GM13976 (cell line): ENCODE measurements at regions of chr5 and their contacts with region 1.

Region 1: DNA sequence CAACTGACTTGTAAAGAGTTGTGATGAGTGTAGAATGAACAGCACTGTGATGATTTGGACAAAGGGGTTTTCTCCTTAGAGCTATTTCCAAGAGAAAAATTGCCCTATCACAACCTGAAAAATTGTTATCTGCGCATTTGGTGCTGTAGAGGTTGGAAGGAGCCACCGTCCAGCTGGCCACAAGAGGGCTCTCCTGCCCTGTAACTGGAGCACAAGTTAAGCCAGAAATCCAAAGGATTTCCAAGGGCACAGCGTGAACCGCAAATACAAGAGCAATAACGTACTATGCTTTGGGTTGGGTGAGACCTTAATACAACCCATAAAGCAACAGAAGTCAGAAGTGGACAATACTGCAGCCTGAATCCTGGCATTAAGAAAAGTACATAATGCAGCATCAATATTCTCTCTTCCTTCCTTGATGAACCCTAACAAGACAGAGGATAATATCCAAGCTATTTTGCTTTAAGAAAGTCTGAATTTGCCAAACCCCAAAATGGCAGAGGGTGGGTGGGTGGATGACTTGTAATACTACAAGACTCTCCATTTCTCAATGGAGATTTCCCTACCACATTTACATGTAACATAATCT is 56.8 kb upstream of the SMIM32 start:
- DNase-seq: peak; percentile 28
- CTCF ChIP-seq: peak; percentile 79

Region 2: DNA sequence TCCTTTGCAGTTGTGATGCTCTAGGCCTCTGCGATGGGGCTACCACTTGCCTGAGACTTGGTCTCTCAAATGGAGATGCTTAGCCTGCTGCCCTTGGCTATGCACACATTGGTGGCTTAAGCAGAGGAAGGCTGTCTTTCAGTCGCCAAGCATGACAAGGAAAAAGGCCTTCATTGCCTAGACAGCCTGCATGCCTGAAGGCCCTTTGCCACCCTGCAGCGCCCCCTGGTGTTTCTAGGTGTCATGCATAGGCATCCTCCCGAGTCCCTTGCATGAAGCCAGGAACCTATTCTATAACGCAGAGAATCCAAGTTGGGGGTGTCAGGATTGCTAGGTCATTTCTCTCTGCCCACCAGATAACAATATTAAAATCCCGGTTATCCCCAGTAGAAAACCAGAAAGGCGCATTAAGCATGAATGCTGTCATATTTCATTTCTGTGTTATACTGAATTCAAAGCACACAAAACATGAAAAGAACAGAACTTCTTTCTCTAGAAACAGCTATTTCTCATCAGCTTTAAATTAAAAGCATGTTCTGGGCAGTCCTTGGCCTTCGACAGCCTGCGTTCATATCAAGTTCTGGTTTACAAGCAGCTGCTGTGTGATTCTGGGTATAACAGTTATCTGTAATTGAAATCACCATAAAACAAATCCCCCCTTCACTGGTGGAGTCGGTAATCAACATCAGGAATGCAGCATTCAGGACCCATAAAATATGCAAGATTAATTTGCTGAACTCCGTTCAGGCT is 175.2 kb after region 1 on chr5:
- in situ Hi-C with region 1: loop called (anchors 10 kb)
- DNase-seq: peak; percentile 66
- CTCF ChIP-seq: peak; percentile 66